ENCODE measurements at regions of chr1 and their contacts with region 1.

Region 1: DNA sequence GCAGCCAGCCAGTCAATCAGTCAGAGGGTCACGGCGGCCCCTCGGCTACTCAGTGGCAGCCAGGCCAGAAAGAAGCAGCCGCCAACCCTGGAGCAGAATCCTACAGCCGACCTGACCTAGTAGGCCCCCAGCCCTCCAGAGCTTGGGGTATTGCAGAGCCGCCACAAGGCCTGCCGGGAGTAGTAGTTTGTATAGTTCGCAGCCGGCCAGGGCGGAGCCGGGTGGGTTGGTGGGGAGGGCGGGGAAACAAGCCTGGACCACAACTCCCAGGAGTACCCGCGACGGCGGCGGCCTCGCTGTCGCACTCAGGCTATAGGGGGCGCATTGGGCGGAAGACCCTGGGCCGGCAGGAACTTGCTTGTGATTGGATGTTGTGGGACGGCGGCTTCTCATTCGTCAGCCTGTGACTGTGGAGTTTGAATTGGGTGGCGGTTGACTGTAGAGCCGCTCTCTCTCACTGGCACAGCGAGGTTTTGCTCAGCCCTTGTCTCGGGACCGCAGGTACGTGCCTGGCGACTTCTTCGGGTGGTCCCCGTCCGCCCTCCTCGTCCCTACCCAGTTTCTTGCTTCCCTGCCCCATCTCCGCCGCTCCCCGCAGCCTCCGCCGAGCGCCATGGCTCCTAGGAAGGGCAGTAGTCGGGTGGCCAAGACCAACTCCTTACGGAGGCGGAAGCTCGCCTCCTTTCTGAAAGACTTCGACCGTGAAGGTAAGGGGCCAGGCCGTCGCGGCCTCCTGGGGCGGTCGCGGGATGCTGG is at the start of gene CDCA8:
- DNase-seq: peak; percentile 93 to 99
- H3K4me3 ChIP-seq: peak within 1 kb of the TSS; percentile 72 to 80
- H3K27ac ChIP-seq: peak within 1 kb of the TSS; percentile 82 to 92
- H3K4me1 ChIP-seq: peaks cover 13 to 22% of the 10 kb centered on the region in 2 donors
- H3K27me3 ChIP-seq: no peaks in the 10 kb centered on the region
- CTCF ChIP-seq: peak; percentile 36 to 61 (median 54)
- total RNA-seq, gene CDCA8: 0.75 TPM

Region 2: GRCh38 chr1:36088575-36089443 is 1603.4 kb before region 1 on chr1 and contains the start of gene ADPRS:
- intact Hi-C with region 1: loop called (anchors 10 kb)
- DNase-seq: peak in 1 of 2 donors; percentile 92
- H3K4me3 ChIP-seq: peak within 1 kb of the TSS; percentile 62 to 88
- H3K27ac ChIP-seq: peak within 1 kb of the TSS; percentile 71 to 85
- H3K4me1 ChIP-seq: peaks cover 12 to 23% of the 10 kb centered on the region in 2 donors
- H3K27me3 ChIP-seq: no peaks in the 10 kb centered on the region
- CTCF ChIP-seq: peak; percentile 98 to 99 (median 99)
- total RNA-seq, gene ADPRS: 69.3 TPM

Region 3: DNA sequence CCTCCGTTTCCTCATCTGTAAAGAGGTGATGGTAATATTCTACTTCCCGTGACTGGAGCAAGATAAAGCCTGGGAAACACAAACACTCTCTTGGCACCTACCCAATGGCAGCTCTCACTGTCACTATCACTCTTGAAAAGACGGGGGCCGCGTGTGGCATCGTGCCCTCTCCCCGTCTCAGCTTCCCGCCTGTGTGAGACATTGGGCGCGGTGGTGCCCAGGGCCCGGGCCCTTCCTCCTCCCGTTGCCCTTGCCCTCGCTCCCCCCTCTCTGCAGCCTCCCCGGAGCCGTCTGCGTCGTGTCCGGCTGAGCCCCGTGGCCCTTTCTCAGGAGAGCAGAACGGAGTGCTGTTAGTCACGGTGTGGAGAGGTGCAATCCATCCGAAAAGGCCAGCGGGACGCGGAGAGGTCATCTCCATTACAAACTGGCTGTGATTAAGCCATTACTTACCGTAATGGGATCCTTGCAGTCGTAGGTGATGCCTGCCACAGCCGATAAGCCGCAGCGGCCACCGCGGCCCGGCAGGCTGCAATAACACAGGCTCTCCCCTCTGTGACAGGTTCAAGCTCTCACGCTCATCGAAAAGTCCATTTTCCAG is 374.3 kb before region 1 on chr1:
- intact Hi-C with region 1: no loop called
- DNase-seq: no peak
- H3K4me3 ChIP-seq: no peak overlapping the region
- H3K27ac ChIP-seq: no peak overlapping the region
- H3K4me1 ChIP-seq: no peaks in the 10 kb centered on the region
- H3K27me3 ChIP-seq: no peaks in the 10 kb centered on the region
- CTCF ChIP-seq: no peak

Region 4: GRCh38 chr1:37514350-37515184 is 177.7 kb before region 1 on chr1 and contains the start of gene MEAF6:
- intact Hi-C with region 1: loop called (anchors 5 kb)
- DNase-seq: peak; percentile 12 to 91
- H3K4me3 ChIP-seq: peak within 1 kb of the TSS; percentile 92 to 99
- H3K27ac ChIP-seq: peak within 1 kb of the TSS; percentile 92 to 99
- H3K4me1 ChIP-seq: peaks cover 8 to 24% of the 10 kb centered on the region in 2 donors
- H3K27me3 ChIP-seq: no peaks in the 10 kb centered on the region
- CTCF ChIP-seq: peak; percentile 20 to 84 (median 48)
- total RNA-seq, gene MEAF6: 12.3 TPM

Region 5: GRCh38 chr1:37595440-37596319 is 96.6 kb before region 1 on chr1 and contains the start of gene GNL2:
- intact Hi-C with region 1: loop called (anchors 2 kb)
- DNase-seq: peak; percentile 86 to 98
- H3K4me3 ChIP-seq: peak within 1 kb of the TSS; percentile 78 to 80
- H3K27ac ChIP-seq: peak within 1 kb of the TSS; percentile 81 to 82
- H3K4me1 ChIP-seq: peaks cover 5 to 15% of the 10 kb centered on the region in 2 donors
- H3K27me3 ChIP-seq: no peaks in the 10 kb centered on the region
- CTCF ChIP-seq: no peak
- total RNA-seq, gene GNL2: 17.0 TPM

Region 6: GRCh38 chr1:37661401-37661800 is 30.9 kb before region 1 on chr1:
- intact Hi-C with region 1: no loop called
- DNase-seq: no peak
- H3K4me3 ChIP-seq: no peak overlapping the region
- H3K27ac ChIP-seq: no peak overlapping the region
- H3K4me1 ChIP-seq: no peaks in the 10 kb centered on the region
- H3K27me3 ChIP-seq: no peaks in the 10 kb centered on the region
- CTCF ChIP-seq: no peak

Region 7: GRCh38 chr1:37859507-37860345 is 167.5 kb after region 1 on chr1 and contains the start of gene MTF1:
- intact Hi-C with region 1: loop called (anchors 1 kb)
- DNase-seq: peak; percentile 92 to 98
- H3K4me3 ChIP-seq: peak within 1 kb of the TSS; percentile 68 to 80
- H3K27ac ChIP-seq: peak within 1 kb of the TSS; percentile 82 to 87
- H3K4me1 ChIP-seq: peaks cover 6 to 19% of the 10 kb centered on the region in 2 donors
- H3K27me3 ChIP-seq: no peaks in the 10 kb centered on the region
- CTCF ChIP-seq: peak; percentile 66 to 91 (median 81)
- total RNA-seq, gene MTF1: 10.6 TPM

Region 8: GRCh38 chr1:38005195-38006007 is 313.1 kb after region 1 on chr1 and contains the start of gene FHL3:
- intact Hi-C with region 1: loop called (anchors 5 kb)
- DNase-seq: no peak
- H3K4me3 ChIP-seq: peak within 1 kb of the TSS; percentile 80 to 89
- H3K27ac ChIP-seq: peak within 1 kb of the TSS; percentile 93 to 96
- H3K4me1 ChIP-seq: peaks cover 14 to 34% of the 10 kb centered on the region in 2 donors
- H3K27me3 ChIP-seq: no peaks in the 10 kb centered on the region
- CTCF ChIP-seq: no peak
- total RNA-seq, gene FHL3: 60.1 TPM